ENCODE measurements at regions of chr11 and their contacts with region 1.

Region 1: GRCh38 chr11:128323381-128323780 is 264.0 kb downstream of the ETS1 start:
- DNase-seq: peak in 1 of 2 donors; percentile 81
- ATAC-seq: no peak
- H3K4me3 ChIP-seq: no peak overlapping the region
- H3K4me3 Mint-ChIP-seq: peak overlapping the region; percentile 77
- H3K27ac ChIP-seq: peak overlapping the region; percentile 83
- H3K27ac Mint-ChIP-seq: peak overlapping the region; percentile 93 to 95
- H3K4me1 ChIP-seq: peaks cover 72% of the 10 kb centered on the region
- H3K4me1 Mint-ChIP-seq: peaks cover 82 to 84% of the 10 kb centered on the region in 2 donors
- H3K27me3 ChIP-seq: no peaks in the 10 kb centered on the region
- H3K27me3 Mint-ChIP-seq: no peaks in the 10 kb centered on the region
- CTCF ChIP-seq: peak; percentile 24

Region 2: DNA sequence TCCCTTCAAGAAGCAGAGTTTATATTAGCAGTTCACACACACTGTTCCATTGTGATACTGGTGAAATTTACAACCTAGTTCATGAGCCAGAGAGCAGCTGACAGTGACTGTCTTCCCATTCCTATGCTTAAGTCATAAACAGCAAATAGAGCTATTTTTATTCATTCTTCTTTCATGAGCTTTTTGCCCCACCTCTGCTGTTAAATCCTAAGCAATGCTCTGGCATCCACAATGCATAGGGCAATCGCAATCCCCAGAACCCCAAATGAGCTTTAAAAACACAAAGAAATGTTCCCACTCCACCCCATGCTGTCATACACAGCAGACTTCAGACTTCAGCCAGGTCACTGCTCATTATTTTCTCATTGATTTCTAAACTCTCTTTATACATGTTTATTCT is 43.5 kb before region 1 on chr11:
- intact Hi-C with region 1: loop called (anchors 10 kb)
- DNase-seq: no peak
- ATAC-seq: no peak
- H3K4me3 ChIP-seq: no peak overlapping the region
- H3K4me3 Mint-ChIP-seq: no peak overlapping the region
- H3K27ac ChIP-seq: no peak overlapping the region
- H3K27ac Mint-ChIP-seq: no peak overlapping the region
- H3K4me1 ChIP-seq: peaks cover 4% of the 10 kb centered on the region
- H3K4me1 Mint-ChIP-seq: peaks cover 23 to 26% of the 10 kb centered on the region in 2 donors
- H3K27me3 ChIP-seq: no peaks in the 10 kb centered on the region
- H3K27me3 Mint-ChIP-seq: peaks cover 0 to 8% of the 10 kb centered on the region in 2 donors
- CTCF ChIP-seq: no peak

Region 3: DNA sequence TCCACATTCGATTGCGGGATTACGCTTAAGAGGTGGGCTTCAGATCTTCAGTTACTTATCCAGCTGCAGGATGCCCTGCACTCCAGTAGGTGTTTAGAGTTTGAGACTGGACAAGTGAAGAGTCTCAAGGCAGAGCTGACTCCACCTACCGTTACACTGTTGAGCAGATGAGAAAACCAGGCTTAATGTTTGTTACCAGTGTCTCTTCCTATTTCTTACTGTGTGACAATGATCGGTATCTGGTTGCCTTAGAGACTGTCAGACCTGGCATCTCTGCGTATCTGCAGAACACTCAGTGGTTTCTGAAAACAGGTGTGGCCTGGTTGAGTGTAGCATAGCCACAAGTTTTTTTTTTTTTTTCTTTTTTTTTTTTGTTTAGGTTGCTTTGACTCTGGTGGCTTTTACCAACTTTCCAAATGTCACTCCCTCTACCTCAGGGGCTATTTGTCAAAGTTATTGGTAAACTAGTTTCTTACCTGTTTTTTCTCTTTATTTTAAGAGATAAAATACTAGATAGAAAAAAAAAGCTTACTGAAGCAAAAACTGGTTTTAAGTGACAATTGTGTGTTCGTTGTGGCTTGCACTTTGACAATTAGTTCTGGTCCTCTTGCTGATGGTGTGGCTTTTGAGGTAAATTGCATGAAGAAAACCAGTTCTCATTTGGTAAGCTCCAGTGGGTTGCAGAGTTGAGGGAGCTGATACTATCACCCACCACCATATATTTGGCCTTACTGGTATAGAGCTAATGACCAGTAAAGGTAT is 20.8 kb before region 1 on chr11:
- intact Hi-C with region 1: loop called (anchors 1 kb)
- DNase-seq: peak; percentile 51 to 95
- ATAC-seq: peak; percentile 81 to 95 (median 88)
- H3K4me3 ChIP-seq: peak overlapping the region; percentile 20
- H3K4me3 Mint-ChIP-seq: peak overlapping the region; percentile 87
- H3K27ac ChIP-seq: peak overlapping the region; percentile 88
- H3K27ac Mint-ChIP-seq: peak overlapping the region; percentile 96 to 99
- H3K4me1 ChIP-seq: peaks cover 52% of the 10 kb centered on the region
- H3K4me1 Mint-ChIP-seq: peaks cover 85 to 89% of the 10 kb centered on the region in 2 donors
- H3K27me3 ChIP-seq: no peaks in the 10 kb centered on the region
- H3K27me3 Mint-ChIP-seq: no peaks in the 10 kb centered on the region
- CTCF ChIP-seq: peak; percentile 23

Region 4: GRCh38 chr11:128394431-128395089 is 71.2 kb after region 1 on chr11:
- intact Hi-C with region 1: no loop called
- DNase-seq: no peak
- ATAC-seq: no peak
- H3K4me3 ChIP-seq: no peak overlapping the region
- H3K4me3 Mint-ChIP-seq: no peak overlapping the region
- H3K27ac ChIP-seq: no peak overlapping the region
- H3K27ac Mint-ChIP-seq: no peak overlapping the region
- H3K4me1 ChIP-seq: no peaks in the 10 kb centered on the region
- H3K4me1 Mint-ChIP-seq: peaks cover 6% of the 10 kb centered on the region in 2 donors
- H3K27me3 ChIP-seq: no peaks in the 10 kb centered on the region
- H3K27me3 Mint-ChIP-seq: no peaks in the 10 kb centered on the region
- CTCF ChIP-seq: no peak

Region 5: DNA sequence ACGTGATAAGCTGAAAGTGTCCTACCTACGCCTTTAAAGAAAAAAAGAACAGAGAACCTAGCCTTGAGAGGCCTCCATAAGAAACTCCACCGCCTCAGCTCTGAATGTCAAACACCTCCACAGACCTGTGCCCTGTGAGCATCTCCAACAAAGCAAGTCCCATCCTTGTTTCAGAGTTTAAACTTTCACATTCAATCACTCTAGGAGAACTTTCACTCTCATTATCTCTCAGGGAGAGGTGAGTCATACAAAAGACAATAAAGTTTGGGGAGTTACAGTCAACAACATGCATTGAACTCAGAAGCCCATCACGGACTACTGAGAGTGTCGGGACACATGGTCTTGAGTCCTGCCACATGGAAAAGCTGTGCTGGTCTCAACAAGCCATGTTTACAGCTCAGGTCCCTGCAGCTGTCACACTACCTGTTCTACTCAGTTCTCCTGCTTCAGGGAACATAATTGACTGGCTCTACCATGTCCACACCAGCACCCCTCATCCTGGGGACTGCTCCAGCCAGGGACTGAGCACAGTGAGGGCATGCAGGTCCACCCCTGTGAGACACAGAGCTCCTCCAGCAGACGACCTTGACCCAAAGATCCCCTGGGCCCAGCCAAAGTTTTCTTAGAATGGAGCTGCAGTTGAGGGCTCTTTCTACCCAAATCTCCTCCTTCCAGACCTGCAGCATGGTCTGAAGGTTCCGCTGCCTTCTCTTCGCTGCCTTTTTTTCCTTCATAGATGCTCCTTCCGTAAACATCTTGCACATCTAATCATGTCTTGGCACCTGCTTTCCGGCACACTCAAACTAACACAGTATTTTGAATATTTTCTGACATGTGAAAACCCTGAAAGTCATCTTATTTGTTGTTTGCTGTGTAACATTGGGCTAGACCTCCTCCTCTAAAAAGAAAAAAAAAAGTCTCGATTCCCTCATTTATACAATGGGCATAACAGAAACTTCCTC is 149.0 kb after region 1 on chr11:
- intact Hi-C with region 1: loop called (anchors 2 kb)
- DNase-seq: peak in 1 of 2 donors; percentile 75
- ATAC-seq: peak; percentile 14 to 53 (median 46)
- H3K4me3 ChIP-seq: no peak overlapping the region
- H3K4me3 Mint-ChIP-seq: peak overlapping the region; percentile 86
- H3K27ac ChIP-seq: peak overlapping the region; percentile 92
- H3K27ac Mint-ChIP-seq: peak overlapping the region; percentile 98 to 99
- H3K4me1 ChIP-seq: peaks cover 81% of the 10 kb centered on the region
- H3K4me1 Mint-ChIP-seq: peaks cover 99% of the 10 kb centered on the region in 2 donors
- H3K27me3 ChIP-seq: no peaks in the 10 kb centered on the region
- H3K27me3 Mint-ChIP-seq: no peaks in the 10 kb centered on the region
- CTCF ChIP-seq: no peak

Region 6: GRCh38 chr11:128506999-128507611 is 183.7 kb after region 1 on chr11:
- intact Hi-C with region 1: loop called (anchors 1 kb)
- DNase-seq: peak in 1 of 2 donors; percentile 60
- ATAC-seq: peak; percentile 42 to 57 (median 49)
- H3K4me3 ChIP-seq: peak overlapping the region; percentile 18
- H3K4me3 Mint-ChIP-seq: peak overlapping the region; percentile 98
- H3K27ac ChIP-seq: peak overlapping the region; percentile 67
- H3K27ac Mint-ChIP-seq: peak overlapping the region; percentile 98 to 99
- H3K4me1 ChIP-seq: peaks cover 77% of the 10 kb centered on the region
- H3K4me1 Mint-ChIP-seq: peaks cover 99 to 100% of the 10 kb centered on the region in 2 donors
- H3K27me3 ChIP-seq: no peaks in the 10 kb centered on the region
- H3K27me3 Mint-ChIP-seq: no peaks in the 10 kb centered on the region
- CTCF ChIP-seq: no peak

Region 7: GRCh38 chr11:128630367-128631230 is 307.2 kb after region 1 on chr11:
- intact Hi-C with region 1: loop called (anchors 1 kb)
- DNase-seq: peak; percentile 90 to 97
- ATAC-seq: peak; percentile 66 to 88 (median 68)
- H3K4me3 ChIP-seq: no peak overlapping the region
- H3K4me3 Mint-ChIP-seq: peak overlapping the region; percentile 59
- H3K27ac ChIP-seq: peak overlapping the region; percentile 59
- H3K27ac Mint-ChIP-seq: peak overlapping the region; percentile 93 to 97
- H3K4me1 ChIP-seq: peaks cover 55% of the 10 kb centered on the region
- H3K4me1 Mint-ChIP-seq: peaks cover 55 to 67% of the 10 kb centered on the region in 2 donors
- H3K27me3 ChIP-seq: no peaks in the 10 kb centered on the region
- H3K27me3 Mint-ChIP-seq: no peaks in the 10 kb centered on the region
- CTCF ChIP-seq: peak; percentile 86

Measured in natural killer cell (primary cell).